HEK293T (cell line): ENCODE measurements at regions of chr6 and their contacts with region 1.

Region 1: DNA sequence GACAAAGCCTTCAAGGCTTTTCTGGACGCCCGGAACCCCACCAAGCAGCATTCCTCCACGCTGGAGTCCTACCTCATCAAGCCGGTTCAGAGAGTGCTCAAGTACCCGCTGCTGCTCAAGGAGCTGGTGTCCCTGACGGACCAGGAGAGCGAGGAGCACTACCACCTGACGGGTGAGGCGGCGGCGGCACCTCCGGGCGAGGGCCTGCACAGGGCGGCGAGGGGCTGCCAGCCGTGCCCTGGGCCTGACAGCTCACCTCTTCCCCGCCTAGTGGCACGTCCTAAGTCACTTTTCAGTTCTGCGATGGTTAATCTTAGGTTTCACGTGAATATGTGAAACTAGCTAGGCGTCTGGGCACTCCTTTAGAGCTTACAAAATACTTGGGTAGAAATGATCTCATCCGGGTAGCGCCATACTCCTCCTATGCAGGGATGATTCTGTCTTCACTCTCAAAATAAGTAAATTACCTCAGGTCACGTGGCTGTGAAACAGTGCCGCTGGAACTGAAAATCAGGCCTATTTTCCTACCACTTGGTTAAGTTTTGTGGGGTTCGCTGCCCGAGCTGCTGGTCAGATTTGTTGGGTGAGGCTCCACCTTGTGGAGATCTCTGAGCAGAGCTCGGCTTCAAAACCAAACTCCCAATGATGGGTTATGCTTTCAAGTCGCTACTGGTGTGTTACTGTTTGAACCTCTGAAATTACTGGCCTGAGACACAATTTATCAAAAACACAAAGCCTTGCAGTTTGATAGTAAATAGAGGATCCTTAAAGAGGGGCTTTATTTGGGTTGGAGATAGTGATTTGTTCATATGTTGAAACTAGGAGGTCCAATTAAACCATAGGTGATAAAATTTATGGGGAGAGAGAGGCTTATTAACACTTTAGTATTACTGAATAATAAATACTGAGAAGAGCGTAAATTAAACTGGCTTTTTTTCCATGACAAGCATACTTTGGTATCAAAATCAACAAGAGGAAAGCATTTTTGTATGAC is 15.5 kb upstream of the CLDN20 start:
- DNase-seq: peak; percentile 48

Region 2: GRCh38 chr6:155026022-155026726 is 222.1 kb before region 1 on chr6:
- CTCF ChIA-PET with region 1: no interaction called
- POLR2A ChIA-PET with region 1: no interaction called
- DNase-seq: no peak

Region 3: GRCh38 chr6:155177363-155177961 is 70.8 kb before region 1 on chr6:
- CTCF ChIA-PET with region 1: interaction called, 10 read pairs
- POLR2A ChIA-PET with region 1: no interaction called
- DNase-seq: peak; percentile 48